ENCODE measurements at regions of chr2 and their contacts with region 1.

Region 1: DNA sequence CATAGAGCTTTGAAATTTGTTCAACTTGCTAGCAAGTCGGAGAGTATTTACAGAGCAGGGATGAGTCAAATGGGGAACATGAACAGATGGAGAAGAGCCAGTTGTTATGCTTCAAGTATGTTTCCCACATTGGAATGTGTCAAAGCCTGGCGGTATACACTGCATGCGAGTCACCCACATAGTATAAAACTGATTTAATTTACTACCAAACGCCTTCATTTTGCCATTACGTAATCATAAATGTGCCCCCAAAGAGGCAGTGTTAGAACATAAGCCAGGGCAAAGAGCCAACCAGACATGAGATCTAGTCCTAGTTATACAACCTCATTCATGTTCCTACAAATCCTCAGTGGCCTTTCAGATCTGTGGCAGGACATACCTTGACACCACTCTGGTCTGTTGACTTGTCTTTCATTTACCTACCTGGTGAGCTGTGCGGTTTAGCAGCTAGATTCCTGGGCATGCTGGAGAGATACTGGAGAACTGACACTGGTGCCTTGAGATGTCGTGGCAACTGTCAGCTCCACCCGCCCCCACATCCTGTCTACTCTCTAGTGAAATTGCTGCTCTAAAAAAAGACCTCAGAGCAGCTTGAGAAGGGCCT is 21.7 kb upstream of the NRP2 start:
- ATAC-seq: peak in 3 of 8 experiments; percentile 37 to 82 (median 77)
- H3K4me3 ChIP-seq: no peak overlapping the region
- H3K27ac ChIP-seq: no peak overlapping the region
- H3K4me1 ChIP-seq: peaks cover 16 to 18% of the 10 kb centered on the region in 2 donors

Region 2: DNA sequence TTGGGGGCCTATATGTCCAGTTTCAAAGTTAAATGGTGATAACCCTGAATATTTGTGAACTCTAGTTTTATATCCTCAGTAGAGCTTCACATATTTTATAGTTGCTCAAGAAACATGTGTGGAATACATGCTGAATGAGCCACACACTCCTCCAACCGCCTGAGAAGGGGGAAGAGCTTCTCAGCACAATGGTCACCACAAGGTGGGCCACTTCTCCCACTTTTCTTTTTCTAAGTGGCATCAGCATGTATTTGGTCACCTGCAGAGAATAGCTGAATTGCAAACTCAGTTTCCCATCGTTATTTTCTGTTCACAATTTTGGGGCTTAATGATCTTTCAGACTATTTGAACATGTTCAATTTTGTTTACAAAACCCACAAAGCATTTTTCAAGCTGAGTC is 774.9 kb before region 1 on chr2:
- in situ Hi-C with region 1: loop called in 1 of 9 experiments (anchors 25 kb)
- ATAC-seq: no peak
- H3K4me3 ChIP-seq: no peak overlapping the region
- H3K27ac ChIP-seq: no peak overlapping the region
- H3K4me1 ChIP-seq: peaks cover 2 to 8% of the 10 kb centered on the region in 2 donors

Region 3: DNA sequence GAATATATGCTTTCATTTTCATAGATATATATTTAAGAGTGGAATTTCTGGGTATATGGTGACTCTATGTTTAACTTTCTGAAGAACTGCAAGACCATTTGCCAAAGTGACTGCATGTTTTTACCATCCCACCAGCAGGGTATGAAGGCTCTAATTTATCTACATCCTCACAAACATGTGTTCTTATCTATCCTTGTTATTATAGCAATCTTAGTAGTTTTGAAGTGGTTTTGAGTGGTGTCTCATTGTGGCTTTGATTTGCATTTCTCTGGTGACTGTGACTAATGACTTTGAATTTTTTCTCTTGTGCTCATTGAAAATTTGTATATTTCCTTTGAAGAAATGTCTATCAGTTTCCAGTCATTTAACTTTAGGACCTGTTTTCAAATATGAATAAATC is 288.5 kb before region 1 on chr2:
- in situ Hi-C with region 1: loop called in 1 of 9 experiments (anchors 25 kb)
- ATAC-seq: peak in 2 of 8 experiments; percentile 26 to 60
- H3K4me3 ChIP-seq: no peak overlapping the region
- H3K27ac ChIP-seq: no peak overlapping the region
- H3K4me1 ChIP-seq: no peaks in the 10 kb centered on the region

Measured in motor neuron (in vitro differentiated cells).